B cell (primary cell): ENCODE measurements at regions of chr10 and their contacts with region 1.

Region 1: DNA sequence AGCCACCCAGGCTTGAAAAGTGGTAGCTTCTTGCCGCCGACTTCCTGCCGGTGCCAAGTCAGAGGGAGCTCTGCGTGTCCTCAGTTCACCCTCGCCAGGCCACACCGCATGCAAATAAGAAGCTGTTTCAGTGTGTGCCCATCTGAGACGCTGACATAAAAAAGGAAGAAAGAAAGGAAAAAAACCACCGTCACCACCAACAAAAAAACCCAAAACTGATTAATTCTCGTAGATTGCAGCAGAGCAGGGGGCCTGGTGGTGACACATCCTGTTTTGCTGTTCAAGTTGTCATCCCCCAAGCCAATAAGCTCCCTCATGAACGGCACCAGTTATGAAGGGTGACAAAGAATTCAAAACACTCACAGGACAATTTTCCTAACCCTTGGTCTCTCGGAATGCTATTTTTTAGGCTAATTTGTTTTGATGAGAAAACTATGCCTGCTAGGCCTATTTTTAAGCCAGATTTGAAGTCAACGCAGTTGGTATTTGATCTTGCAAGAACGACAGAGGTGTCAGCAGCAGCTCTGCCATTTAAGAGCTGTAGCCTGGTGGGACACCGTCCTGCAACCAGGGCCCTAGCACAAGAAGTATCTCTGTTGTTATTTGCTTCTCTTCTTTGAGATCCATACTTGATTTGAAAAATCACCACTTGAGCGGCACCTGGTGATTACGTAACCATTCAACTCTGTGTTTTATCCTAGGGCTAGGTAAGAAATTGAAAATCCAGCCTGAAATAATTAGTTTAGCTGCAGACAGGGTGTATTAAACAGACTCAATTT is 145.6 kb downstream of the PFKFB3 start:
- DNase-seq: peak; percentile 95
- ATAC-seq: peak; percentile 90
- H3K4me3 ChIP-seq: peak overlapping the region; percentile 1 to 49 (median 9)
- H3K4me3 Mint-ChIP-seq: peak overlapping the region; percentile 75
- H3K27ac ChIP-seq: peak overlapping the region; percentile 80 to 81
- H3K27ac Mint-ChIP-seq: peak overlapping the region; percentile 96
- H3K4me1 ChIP-seq: peaks cover 42 to 49% of the 10 kb centered on the region in 2 donors
- H3K4me1 Mint-ChIP-seq: peaks cover 52% of the 10 kb centered on the region
- H3K27me3 ChIP-seq: peaks cover 0 to 11% (median 0%) of the 10 kb centered on the region in 4 experiments
- H3K27me3 Mint-ChIP-seq: peaks cover 3% of the 10 kb centered on the region
- CTCF ChIP-seq: no peak

Region 2: GRCh38 chr10:6275022-6275997 is 73.0 kb before region 1 on chr10:
- CTCF ChIA-PET with region 1: interaction called, 3 read pairs
- POLR2A ChIA-PET with region 1: interaction called, 5 read pairs
- intact Hi-C with region 1: loop called (anchors 1 kb)
- DNase-seq: peak; percentile 71
- ATAC-seq: peak; percentile 84
- H3K4me3 ChIP-seq: peak overlapping the region in 4 of 5 experiments; percentile 32 to 54 (median 37)
- H3K4me3 Mint-ChIP-seq: peak overlapping the region; percentile 86
- H3K27ac ChIP-seq: peak overlapping the region in 1 of 2 donors; percentile 54
- H3K27ac Mint-ChIP-seq: peak overlapping the region; percentile 90
- H3K4me1 ChIP-seq: peaks cover 4 to 22% of the 10 kb centered on the region in 2 donors
- H3K4me1 Mint-ChIP-seq: peaks cover 28% of the 10 kb centered on the region
- H3K27me3 ChIP-seq: peaks cover 0 to 5% (median 0%) of the 10 kb centered on the region in 4 experiments
- H3K27me3 Mint-ChIP-seq: no peaks in the 10 kb centered on the region
- CTCF ChIP-seq: no peak

Region 3: DNA sequence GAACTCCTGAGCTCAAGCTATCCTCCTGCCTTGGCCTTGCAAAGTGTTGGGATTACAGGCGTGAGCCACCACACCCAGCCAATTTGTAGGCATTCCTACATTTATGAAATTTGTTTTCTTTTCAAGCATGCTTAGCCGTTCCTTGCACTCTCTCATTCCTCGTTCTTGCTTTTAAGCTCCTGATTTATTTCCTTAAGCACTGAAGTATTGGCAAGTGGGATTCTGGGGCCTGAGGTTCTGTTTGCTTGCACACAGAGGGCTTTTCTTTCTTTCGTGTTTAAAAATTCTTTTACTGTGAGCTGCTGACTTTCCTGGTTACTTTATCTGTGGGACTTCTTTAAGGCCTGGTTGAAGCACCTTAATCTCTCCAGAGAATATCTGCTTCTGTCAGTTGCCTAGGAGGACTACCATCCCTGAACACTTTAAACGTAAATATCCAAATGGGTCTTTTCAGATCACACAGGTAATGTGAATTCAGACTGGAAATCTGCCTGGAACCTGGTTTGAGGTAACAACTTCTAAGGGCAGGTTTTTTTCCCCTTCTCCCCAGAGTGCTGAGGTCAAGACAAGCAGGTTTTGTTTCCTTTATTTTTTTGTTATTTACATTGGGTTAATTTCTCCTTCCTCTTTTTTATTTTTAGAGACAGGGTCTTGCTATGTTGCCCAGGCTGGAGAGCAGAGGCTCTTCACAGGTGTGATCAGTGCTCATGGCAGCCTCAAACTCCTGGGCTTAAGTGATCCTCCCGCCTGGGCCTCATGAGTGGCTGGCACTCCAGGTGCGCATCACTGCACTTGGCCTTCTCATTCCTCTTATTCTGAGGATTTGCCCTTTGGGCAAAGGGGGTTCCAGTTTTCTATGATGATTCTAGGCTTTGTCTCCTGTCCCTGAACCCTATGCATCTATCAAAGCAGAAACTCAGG is 42.6 kb before region 1 on chr10:
- CTCF ChIA-PET with region 1: interaction called, 34 read pairs
- POLR2A ChIA-PET with region 1: interaction called, 15 read pairs
- intact Hi-C with region 1: loop called (anchors 1 kb)
- DNase-seq: peak; percentile 37
- ATAC-seq: peak; percentile 73
- H3K4me3 ChIP-seq: no peak overlapping the region
- H3K4me3 Mint-ChIP-seq: peak overlapping the region; percentile 72
- H3K27ac ChIP-seq: no peak overlapping the region
- H3K27ac Mint-ChIP-seq: peak overlapping the region; percentile 73
- H3K4me1 ChIP-seq: peaks cover 34 to 51% of the 10 kb centered on the region in 2 donors
- H3K4me1 Mint-ChIP-seq: peaks cover 51% of the 10 kb centered on the region
- H3K27me3 ChIP-seq: no peaks in the 10 kb centered on the region
- H3K27me3 Mint-ChIP-seq: no peaks in the 10 kb centered on the region
- CTCF ChIP-seq: no peak

Region 4: DNA sequence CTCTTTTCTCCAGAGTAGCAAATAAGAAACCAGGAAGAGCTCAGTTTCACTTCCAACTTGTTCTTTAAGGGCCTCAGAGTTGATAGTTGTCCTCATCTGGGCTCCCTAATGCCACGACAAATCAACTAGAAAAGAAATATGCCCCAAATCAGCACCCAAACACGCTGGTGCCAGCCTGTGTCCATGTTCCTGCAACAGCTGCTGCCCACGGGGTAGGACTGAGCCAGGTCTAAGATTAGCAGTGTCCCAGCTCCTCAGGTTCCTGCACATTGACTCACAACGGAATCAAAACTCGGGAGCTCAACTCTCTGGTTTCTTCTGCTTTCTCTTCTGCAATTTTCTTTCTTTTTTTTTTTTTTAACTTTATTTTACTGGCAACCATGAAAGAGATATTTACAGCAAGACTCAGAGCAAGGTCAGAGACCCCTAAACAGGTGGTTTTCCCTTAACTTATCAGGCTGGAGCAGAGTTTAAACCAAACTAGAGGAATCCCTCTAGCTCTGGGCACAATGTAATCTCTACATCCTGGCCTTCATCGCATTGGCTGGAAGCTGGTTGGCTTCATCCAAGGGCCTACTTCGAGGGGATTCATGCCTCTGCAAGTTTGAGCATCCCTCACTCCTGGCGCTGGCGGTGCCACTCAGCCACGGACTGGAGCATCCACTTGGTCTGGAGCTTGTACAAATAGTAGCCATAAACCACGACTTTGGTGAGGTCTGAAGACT is 19.4 kb before region 1 on chr10:
- CTCF ChIA-PET with region 1: interaction called, 21 read pairs
- POLR2A ChIA-PET with region 1: interaction called, 5 read pairs
- intact Hi-C with region 1: no loop called
- DNase-seq: peak; percentile 68
- ATAC-seq: peak; percentile 57
- H3K4me3 ChIP-seq: peak overlapping the region in 4 of 5 experiments; percentile 16 to 54 (median 40)
- H3K4me3 Mint-ChIP-seq: peak overlapping the region; percentile 77
- H3K27ac ChIP-seq: peak overlapping the region; percentile 50 to 62
- H3K27ac Mint-ChIP-seq: peak overlapping the region; percentile 86
- H3K4me1 ChIP-seq: peaks cover 21 to 27% of the 10 kb centered on the region in 2 donors
- H3K4me1 Mint-ChIP-seq: peaks cover 33% of the 10 kb centered on the region
- H3K27me3 ChIP-seq: no peaks in the 10 kb centered on the region
- H3K27me3 Mint-ChIP-seq: no peaks in the 10 kb centered on the region
- CTCF ChIP-seq: no peak